Activated CD8-positive, alpha-beta T cell treated with anti-CD3 and anti-CD28 coated beads for 36 hours (primary cell): ENCODE measurements at regions of chr11 and their contacts with region 1.

Region 1: DNA sequence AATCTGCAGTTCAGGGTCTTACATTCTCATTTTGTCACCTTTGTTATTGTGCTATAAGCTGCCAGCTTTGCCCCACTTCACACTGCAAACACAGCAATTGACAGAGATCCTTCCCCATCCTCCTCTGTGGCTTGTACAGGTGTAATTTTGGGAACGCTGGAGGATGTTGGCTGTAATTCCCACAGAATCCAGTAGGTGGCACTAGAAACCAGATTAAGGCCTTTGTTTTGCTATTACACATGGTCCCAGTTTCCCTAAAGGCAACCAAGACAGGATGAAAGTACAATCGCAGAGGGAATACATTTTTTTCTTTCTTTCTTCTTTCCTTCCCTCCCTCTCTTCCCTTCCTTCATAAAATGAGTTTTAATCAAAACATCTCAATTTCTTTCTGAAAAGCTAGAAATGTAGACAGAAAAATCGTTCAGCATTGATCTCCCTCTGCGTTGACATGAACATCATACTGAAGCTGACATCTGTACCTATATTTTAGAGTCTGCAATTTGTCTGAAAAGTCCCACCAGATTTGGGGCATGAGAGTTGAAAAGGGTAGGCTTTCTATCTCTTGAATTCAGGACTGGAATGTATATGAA is 21.3 kb upstream of the NELL1 start:
- DNase-seq: peak; percentile 52
- ATAC-seq: peak; percentile 37
- H3K4me3 Mint-ChIP-seq: no peak overlapping the region
- H3K27ac Mint-ChIP-seq: no peak overlapping the region
- H3K4me1 Mint-ChIP-seq: no peaks in the 10 kb centered on the region
- H3K27me3 Mint-ChIP-seq: peaks cover 2% of the 10 kb centered on the region
- CTCF ChIP-seq: peak; percentile 93

Region 2: GRCh38 chr11:20518323-20518834 is 129.7 kb before region 1 on chr11:
- CTCF ChIA-PET with region 1: no interaction called
- POLR2A ChIA-PET with region 1: no interaction called
- intact Hi-C with region 1: no loop called
- DNase-seq: no peak
- ATAC-seq: no peak
- H3K4me3 Mint-ChIP-seq: no peak overlapping the region
- H3K27ac Mint-ChIP-seq: no peak overlapping the region
- H3K4me1 Mint-ChIP-seq: no peaks in the 10 kb centered on the region
- H3K27me3 Mint-ChIP-seq: peaks cover 17% of the 10 kb centered on the region
- CTCF ChIP-seq: no peak

Region 3: GRCh38 chr11:20631519-20632168 is 16.4 kb before region 1 on chr11:
- CTCF ChIA-PET with region 1: no interaction called
- POLR2A ChIA-PET with region 1: no interaction called
- intact Hi-C with region 1: no loop called
- DNase-seq: no peak
- ATAC-seq: no peak
- H3K4me3 Mint-ChIP-seq: no peak overlapping the region
- H3K27ac Mint-ChIP-seq: no peak overlapping the region
- H3K4me1 Mint-ChIP-seq: no peaks in the 10 kb centered on the region
- H3K27me3 Mint-ChIP-seq: peaks cover 11% of the 10 kb centered on the region
- CTCF ChIP-seq: no peak

Region 4: GRCh38 chr11:20658135-20658534 is 10.1 kb after region 1 on chr11:
- CTCF ChIA-PET with region 1: interaction called, 13 read pairs
- POLR2A ChIA-PET with region 1: no interaction called
- intact Hi-C with region 1: no loop called
- DNase-seq: no peak
- ATAC-seq: no peak
- H3K4me3 Mint-ChIP-seq: no peak overlapping the region
- H3K27ac Mint-ChIP-seq: no peak overlapping the region
- H3K4me1 Mint-ChIP-seq: no peaks in the 10 kb centered on the region
- H3K27me3 Mint-ChIP-seq: peaks cover 14% of the 10 kb centered on the region
- CTCF ChIP-seq: no peak

Region 5: GRCh38 chr11:20671856-20672546 is 23.9 kb after region 1 on chr11:
- CTCF ChIA-PET with region 1: interaction called, 35 read pairs
- POLR2A ChIA-PET with region 1: no interaction called
- intact Hi-C with region 1: no loop called
- DNase-seq: no peak
- ATAC-seq: no peak
- H3K4me3 Mint-ChIP-seq: no peak overlapping the region
- H3K27ac Mint-ChIP-seq: no peak overlapping the region
- H3K4me1 Mint-ChIP-seq: no peaks in the 10 kb centered on the region
- H3K27me3 Mint-ChIP-seq: peaks cover 47% of the 10 kb centered on the region
- CTCF ChIP-seq: no peak

Region 6: GRCh38 chr11:21511835-21512440 is 863.9 kb after region 1 on chr11:
- CTCF ChIA-PET with region 1: interaction called, 6 read pairs
- POLR2A ChIA-PET with region 1: no interaction called
- intact Hi-C with region 1: loop called (anchors 5 kb)
- DNase-seq: peak; percentile 62
- ATAC-seq: no peak
- H3K4me3 Mint-ChIP-seq: no peak overlapping the region
- H3K27ac Mint-ChIP-seq: no peak overlapping the region
- H3K4me1 Mint-ChIP-seq: no peaks in the 10 kb centered on the region
- H3K27me3 Mint-ChIP-seq: no peaks in the 10 kb centered on the region
- CTCF ChIP-seq: peak; percentile 28

Region 7: GRCh38 chr11:22304337-22304961 is 1656.4 kb after region 1 on chr11:
- CTCF ChIA-PET with region 1: interaction called, 11 read pairs
- POLR2A ChIA-PET with region 1: no interaction called
- intact Hi-C with region 1: loop called (anchors 10 kb)
- DNase-seq: no peak
- ATAC-seq: no peak
- H3K4me3 Mint-ChIP-seq: no peak overlapping the region
- H3K27ac Mint-ChIP-seq: no peak overlapping the region
- H3K4me1 Mint-ChIP-seq: no peaks in the 10 kb centered on the region
- H3K27me3 Mint-ChIP-seq: peaks cover 6% of the 10 kb centered on the region
- CTCF ChIP-seq: peak; percentile 84